Activated CD8-positive, alpha-beta T cell treated with anti-CD3 and anti-CD28 coated beads for 36 hours (primary cell): ENCODE measurements at regions of chr10 and their contacts with region 1.

Region 1: GRCh38 chr10:98425511-98426352 is 10.8 kb upstream of the PYROXD2 start:
- DNase-seq: peak; percentile 70
- ATAC-seq: peak; percentile 87
- H3K4me3 Mint-ChIP-seq: no peak overlapping the region
- H3K27ac Mint-ChIP-seq: no peak overlapping the region
- H3K4me1 Mint-ChIP-seq: no peaks in the 10 kb centered on the region
- H3K27me3 Mint-ChIP-seq: no peaks in the 10 kb centered on the region
- CTCF ChIP-seq: peak; percentile 80

Region 2: GRCh38 chr10:97903128-97904017 is 522.4 kb before region 1 on chr10:
- CTCF ChIA-PET with region 1: no interaction called
- POLR2A ChIA-PET with region 1: no interaction called
- intact Hi-C with region 1: no loop called
- DNase-seq: no peak
- ATAC-seq: no peak
- H3K4me3 Mint-ChIP-seq: no peak overlapping the region
- H3K27ac Mint-ChIP-seq: no peak overlapping the region
- H3K4me1 Mint-ChIP-seq: no peaks in the 10 kb centered on the region
- H3K27me3 Mint-ChIP-seq: peaks cover 3% of the 10 kb centered on the region
- CTCF ChIP-seq: no peak

Region 3: GRCh38 chr10:98295907-98296306 is 129.8 kb before region 1 on chr10:
- CTCF ChIA-PET with region 1: no interaction called
- POLR2A ChIA-PET with region 1: no interaction called
- intact Hi-C with region 1: no loop called
- DNase-seq: no peak
- ATAC-seq: no peak
- H3K4me3 Mint-ChIP-seq: no peak overlapping the region
- H3K27ac Mint-ChIP-seq: no peak overlapping the region
- H3K4me1 Mint-ChIP-seq: no peaks in the 10 kb centered on the region
- H3K27me3 Mint-ChIP-seq: peaks cover 13% of the 10 kb centered on the region
- CTCF ChIP-seq: no peak

Region 4: DNA sequence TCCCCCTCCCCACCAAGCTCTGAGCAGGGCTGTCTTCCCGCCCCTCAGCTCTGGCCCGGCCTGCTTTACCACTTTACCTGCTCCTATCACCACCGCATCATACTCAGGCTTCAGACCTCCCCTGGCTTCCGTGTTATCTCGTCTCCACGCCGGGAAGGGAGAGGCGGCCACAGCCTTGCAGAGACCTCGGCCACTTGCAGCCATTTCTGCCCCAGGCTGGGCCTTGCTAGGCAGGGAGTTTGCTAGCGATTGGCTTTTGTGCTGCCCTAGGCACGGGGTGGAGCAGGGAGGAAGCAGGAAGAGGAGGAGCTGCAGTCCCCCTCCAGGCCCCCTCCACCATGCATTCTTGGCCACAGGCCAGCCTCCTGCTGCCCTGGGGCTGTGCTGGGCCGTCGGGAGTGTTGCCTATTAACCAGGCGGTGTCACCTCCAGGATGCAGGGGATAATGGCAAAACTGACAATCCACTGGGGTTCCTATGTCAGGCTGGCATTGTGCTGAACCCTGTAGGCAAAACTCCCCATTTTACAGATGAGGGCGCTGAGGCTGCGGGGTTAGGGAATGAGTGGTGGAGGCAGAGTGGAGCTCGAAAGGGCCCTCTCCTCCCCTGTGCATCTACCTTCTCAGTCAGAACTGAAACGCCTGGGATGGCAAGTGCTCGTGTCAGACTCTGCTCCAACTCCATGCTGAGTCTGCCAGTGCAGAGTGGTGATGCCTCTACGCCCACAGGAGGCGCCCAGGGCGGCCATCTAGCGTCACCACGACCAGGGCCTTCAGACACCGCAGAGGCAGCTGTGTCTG is 10.6 kb before region 1 on chr10 and contains the start of gene PYROXD2:
- CTCF ChIA-PET with region 1: interaction called, 25 read pairs
- POLR2A ChIA-PET with region 1: interaction called, 3 read pairs
- intact Hi-C with region 1: no loop called
- DNase-seq: peak; percentile 71
- ATAC-seq: peak; percentile 93
- H3K4me3 Mint-ChIP-seq: peak within 1 kb of the TSS; percentile 88
- H3K27ac Mint-ChIP-seq: peak within 1 kb of the TSS; percentile 95
- H3K4me1 Mint-ChIP-seq: peaks cover 20% of the 10 kb centered on the region
- H3K27me3 Mint-ChIP-seq: no peaks in the 10 kb centered on the region
- CTCF ChIP-seq: no peak
- total RNA-seq, gene PYROXD2: 5.3 to 6.2 TPM

Region 5: DNA sequence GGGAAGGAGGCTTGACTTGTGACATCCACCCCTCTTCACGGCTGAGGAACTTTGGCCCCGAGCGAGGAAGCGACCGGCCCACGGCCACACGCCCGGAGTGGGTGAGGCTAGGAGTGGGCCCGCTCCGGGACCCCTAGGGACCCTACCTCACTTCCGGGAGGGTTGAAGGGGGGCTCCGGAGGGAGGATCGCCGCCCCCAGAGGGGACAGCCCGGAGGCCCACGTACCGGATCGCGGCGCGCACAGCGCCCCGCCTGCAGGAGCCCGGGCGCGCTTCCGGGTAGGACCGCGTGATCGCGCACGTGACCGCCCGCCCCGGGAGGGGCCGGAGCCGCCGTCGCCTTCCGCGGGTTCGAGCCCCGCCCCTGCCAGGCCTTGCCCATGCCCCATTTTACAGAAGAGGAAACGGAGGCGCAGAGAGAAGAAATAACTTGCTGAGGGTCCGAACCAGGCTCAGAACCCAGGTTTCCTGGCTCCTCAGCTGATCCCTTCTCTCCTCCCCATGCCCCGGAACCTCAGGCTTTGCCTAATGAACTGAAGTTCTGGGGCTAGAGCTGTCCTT is 21.0 kb after region 1 on chr10 and contains the start of gene HPS1:
- CTCF ChIA-PET with region 1: interaction called, 15 read pairs
- POLR2A ChIA-PET with region 1: interaction called, 3 read pairs
- intact Hi-C with region 1: no loop called
- DNase-seq: peak; percentile 87
- ATAC-seq: peak; percentile 94
- H3K4me3 Mint-ChIP-seq: peak within 1 kb of the TSS; percentile 94
- H3K27ac Mint-ChIP-seq: peak within 1 kb of the TSS; percentile 91
- H3K4me1 Mint-ChIP-seq: peaks cover 32% of the 10 kb centered on the region
- H3K27me3 Mint-ChIP-seq: peaks cover 5% of the 10 kb centered on the region
- CTCF ChIP-seq: no peak
- total RNA-seq, gene HPS1: 51.9 to 52.1 TPM